ENCODE measurements at regions of chr3 and their contacts with region 1.

Region 1: GRCh38 chr3:8095724-8096123 is 405.9 kb upstream of the LMCD1 start:
- DNase-seq: no peak
- ATAC-seq: no peak
- H3K4me3 ChIP-seq: no peak overlapping the region
- H3K27ac ChIP-seq: no peak overlapping the region
- H3K4me1 ChIP-seq: no peaks in the 10 kb centered on the region
- H3K27me3 ChIP-seq: no peaks in the 10 kb centered on the region
- CTCF ChIP-seq: peak; percentile 16

Region 2: DNA sequence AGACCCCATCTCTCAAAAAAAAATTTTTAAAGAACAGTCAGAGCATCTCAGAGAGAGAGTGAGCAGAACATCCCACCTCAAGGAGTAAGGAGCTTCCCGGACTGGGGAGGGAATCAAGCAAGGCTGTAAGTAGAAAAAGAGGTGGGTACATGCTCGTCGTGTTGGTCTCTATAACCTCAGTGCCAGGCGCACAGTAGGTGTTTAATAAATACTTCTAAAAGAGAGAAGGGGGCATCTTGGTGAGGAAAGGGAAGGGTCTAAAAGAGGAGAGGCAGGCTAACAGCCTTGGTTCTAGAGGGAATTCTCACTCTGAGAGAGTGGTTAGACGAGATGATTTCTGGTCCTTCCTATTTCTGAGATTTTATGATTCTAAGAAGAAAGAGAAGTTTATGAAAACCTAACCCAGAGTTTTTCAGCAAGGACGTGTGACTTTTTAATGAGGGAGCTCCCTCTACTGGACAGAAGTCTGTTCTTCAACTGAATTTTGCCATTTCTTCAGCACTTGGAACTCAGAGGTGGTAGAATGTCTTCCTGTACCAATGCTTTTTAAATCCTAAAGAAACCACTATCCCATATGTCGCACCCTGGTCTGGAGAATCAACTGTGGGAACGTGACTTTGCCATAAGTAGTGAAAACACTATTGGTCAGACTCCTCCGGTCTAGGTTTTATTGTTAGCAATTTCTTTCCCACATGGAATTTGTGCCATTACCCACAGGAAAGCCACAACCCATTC is 206.2 kb after region 1 on chr3:
- intact Hi-C with region 1: loop called in 1 of 2 experiments (anchors 10 kb)
- DNase-seq: no peak
- ATAC-seq: peak in 1 of 4 donors; percentile 30
- H3K4me3 ChIP-seq: no peak overlapping the region
- H3K27ac ChIP-seq: no peak overlapping the region
- H3K4me1 ChIP-seq: no peaks in the 10 kb centered on the region
- H3K27me3 ChIP-seq: no peaks in the 10 kb centered on the region
- CTCF ChIP-seq: peak; percentile 66

Measured in psoas muscle (tissue), 8 donors.